ENCODE measurements at regions of chr1 and their contacts with region 1.

Region 1: GRCh38 chr1:26602378-26602959 is 72.9 kb downstream of the RPS6KA1 start:
- DNase-seq: no peak
- H3K4me3 ChIP-seq: no peak overlapping the region
- H3K27ac ChIP-seq: no peak overlapping the region
- H3K4me1 ChIP-seq: no peaks in the 10 kb centered on the region; a peak in 1 of 7 replicates
- H3K27me3 ChIP-seq: no peaks in the 10 kb centered on the region
- CTCF ChIP-seq: peak in 2 of 3 experiments; percentile 74 to 75; a peak in 3 of 4 replicates
- EP300 ChIP-seq: no peak
- POLR2A ChIP-seq: no peak
- RAD21 ChIP-seq: peak; percentile 94 to 95

Region 2: GRCh38 chr1:26478159-26478558 is 124.3 kb before region 1 on chr1:
- CTCF ChIA-PET with region 1: no interaction called
- POLR2A ChIA-PET with region 1: no interaction called
- DNase-seq: no peak
- H3K4me3 ChIP-seq: no peak overlapping the region
- H3K27ac ChIP-seq: no peak overlapping the region
- H3K4me1 ChIP-seq: peaks cover 0 to 7% (median 1%) of the 10 kb centered on the region in 4 experiments; a peak in 2 of 7 replicates
- H3K27me3 ChIP-seq: no peaks in the 10 kb centered on the region
- CTCF ChIP-seq: no peak
- EP300 ChIP-seq: no peak
- POLR2A ChIP-seq: no peak; a peak in 1 of 3 replicates
- RAD21 ChIP-seq: no peak

Region 3: DNA sequence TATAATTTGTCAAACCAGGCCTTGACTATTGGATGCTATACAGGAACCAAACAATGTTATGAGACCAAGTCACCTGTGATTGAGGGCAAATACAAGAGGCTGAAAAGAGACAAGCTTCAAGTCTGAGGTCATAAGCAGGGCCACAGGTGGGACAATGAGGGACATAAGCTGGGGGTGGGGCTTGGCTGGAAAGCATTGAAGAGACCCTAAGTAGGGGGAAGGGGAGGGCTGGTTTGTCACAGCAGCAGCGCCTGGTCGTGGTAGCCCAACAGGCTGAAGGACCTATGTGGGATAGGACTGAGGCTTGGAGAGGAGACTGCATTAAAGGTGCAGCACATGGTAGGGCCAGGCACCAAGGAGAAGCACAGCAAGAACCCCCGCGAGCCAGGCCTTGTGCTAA is 112.3 kb before region 1 on chr1:
- CTCF ChIA-PET with region 1: no interaction called
- POLR2A ChIA-PET with region 1: no interaction called
- DNase-seq: no peak
- H3K4me3 ChIP-seq: no peak overlapping the region
- H3K27ac ChIP-seq: no peak overlapping the region
- H3K4me1 ChIP-seq: no peaks in the 10 kb centered on the region; a peak in 1 of 7 replicates
- H3K27me3 ChIP-seq: no peaks in the 10 kb centered on the region
- CTCF ChIP-seq: no peak
- EP300 ChIP-seq: no peak
- POLR2A ChIP-seq: no peak
- RAD21 ChIP-seq: no peak

Region 4: GRCh38 chr1:26516987-26517765 is 85.3 kb before region 1 on chr1:
- CTCF ChIA-PET with region 1: no interaction called
- POLR2A ChIA-PET with region 1: no interaction called
- DNase-seq: no peak
- H3K4me3 ChIP-seq: no peak overlapping the region
- H3K27ac ChIP-seq: no peak overlapping the region
- H3K4me1 ChIP-seq: peaks cover 0 to 3% (median 0%) of the 10 kb centered on the region in 4 experiments; a peak in 1 of 7 replicates
- H3K27me3 ChIP-seq: no peaks in the 10 kb centered on the region; a peak in 1 of 7 replicates
- CTCF ChIP-seq: no peak
- EP300 ChIP-seq: no peak
- POLR2A ChIP-seq: no peak
- RAD21 ChIP-seq: no peak

Region 5: GRCh38 chr1:26583646-26584485 is 18.6 kb before region 1 on chr1:
- CTCF ChIA-PET with region 1: interaction called, 23 read pairs
- POLR2A ChIA-PET with region 1: no interaction called
- DNase-seq: peak; percentile 10 to 65
- H3K4me3 ChIP-seq: no peak overlapping the region
- H3K27ac ChIP-seq: no peak overlapping the region
- H3K4me1 ChIP-seq: no peaks in the 10 kb centered on the region
- H3K27me3 ChIP-seq: no peaks in the 10 kb centered on the region
- CTCF ChIP-seq: peak; percentile 71 to 86 (median 73)
- EP300 ChIP-seq: no peak
- POLR2A ChIP-seq: no peak
- RAD21 ChIP-seq: peak; percentile 74 to 81

Region 6: DNA sequence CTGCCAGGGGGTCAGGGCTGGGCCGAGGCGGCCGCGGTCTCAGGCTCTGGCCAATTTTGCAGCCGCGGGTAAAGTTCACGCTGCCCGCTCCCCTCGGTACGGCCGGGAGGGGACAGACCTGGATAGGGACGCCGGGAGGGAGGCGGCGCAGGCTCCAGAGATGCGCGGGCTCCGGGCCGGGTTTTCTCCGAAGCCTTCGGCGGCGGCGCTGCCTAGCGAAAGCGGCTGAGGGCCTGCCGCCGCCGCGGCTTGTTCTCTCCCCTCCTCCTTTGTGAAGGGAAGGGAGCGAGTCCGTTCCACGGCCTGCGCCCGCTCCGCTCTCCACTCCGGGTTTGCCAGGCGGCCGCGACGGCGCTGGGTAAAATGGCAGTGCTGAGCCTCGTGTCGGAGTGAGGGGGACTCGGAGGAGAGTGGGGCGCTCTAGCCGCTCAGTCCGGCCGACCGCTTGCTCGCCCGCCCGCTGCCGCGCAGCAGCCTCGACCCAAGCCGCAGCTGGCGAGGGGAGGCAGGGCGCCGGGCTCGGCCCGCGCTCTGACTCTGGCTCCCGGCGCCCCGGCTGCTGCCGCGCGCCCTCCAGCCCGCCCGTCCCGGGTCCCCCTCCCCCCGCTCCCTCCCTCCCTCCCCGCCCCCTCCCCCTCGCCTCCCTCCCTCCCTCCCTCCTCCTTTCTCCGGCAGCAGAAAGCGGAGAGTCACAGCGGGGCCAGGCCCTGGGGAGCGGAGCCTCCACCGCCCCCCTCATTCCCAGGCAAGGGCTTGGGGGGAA is 93.1 kb after region 1 on chr1 and contains the start of gene ARID1A:
- CTCF ChIA-PET with region 1: interaction called, 41 read pairs
- POLR2A ChIA-PET with region 1: interaction called, 4 read pairs
- DNase-seq: peak; percentile 73 to 97
- H3K4me3 ChIP-seq: peak within 1 kb of the TSS; percentile 88 to 95 (median 92)
- H3K27ac ChIP-seq: peak within 1 kb of the TSS; percentile 93
- H3K4me1 ChIP-seq: peaks cover 14 to 19% (median 16%) of the 10 kb centered on the region in 4 experiments; a peak in 6 of 7 replicates
- H3K27me3 ChIP-seq: no peaks in the 10 kb centered on the region
- CTCF ChIP-seq: no peak
- EP300 ChIP-seq: peak in 1 of 2 experiments; percentile 70; a peak in 1 of 3 replicates
- POLR2A ChIP-seq: peak; percentile 72 to 75
- RAD21 ChIP-seq: peak; percentile 6 to 13; a peak in 2 of 4 replicates
- total RNA-seq, gene ARID1A: 103 and 105 TPM in 2 replicates

Region 7: DNA sequence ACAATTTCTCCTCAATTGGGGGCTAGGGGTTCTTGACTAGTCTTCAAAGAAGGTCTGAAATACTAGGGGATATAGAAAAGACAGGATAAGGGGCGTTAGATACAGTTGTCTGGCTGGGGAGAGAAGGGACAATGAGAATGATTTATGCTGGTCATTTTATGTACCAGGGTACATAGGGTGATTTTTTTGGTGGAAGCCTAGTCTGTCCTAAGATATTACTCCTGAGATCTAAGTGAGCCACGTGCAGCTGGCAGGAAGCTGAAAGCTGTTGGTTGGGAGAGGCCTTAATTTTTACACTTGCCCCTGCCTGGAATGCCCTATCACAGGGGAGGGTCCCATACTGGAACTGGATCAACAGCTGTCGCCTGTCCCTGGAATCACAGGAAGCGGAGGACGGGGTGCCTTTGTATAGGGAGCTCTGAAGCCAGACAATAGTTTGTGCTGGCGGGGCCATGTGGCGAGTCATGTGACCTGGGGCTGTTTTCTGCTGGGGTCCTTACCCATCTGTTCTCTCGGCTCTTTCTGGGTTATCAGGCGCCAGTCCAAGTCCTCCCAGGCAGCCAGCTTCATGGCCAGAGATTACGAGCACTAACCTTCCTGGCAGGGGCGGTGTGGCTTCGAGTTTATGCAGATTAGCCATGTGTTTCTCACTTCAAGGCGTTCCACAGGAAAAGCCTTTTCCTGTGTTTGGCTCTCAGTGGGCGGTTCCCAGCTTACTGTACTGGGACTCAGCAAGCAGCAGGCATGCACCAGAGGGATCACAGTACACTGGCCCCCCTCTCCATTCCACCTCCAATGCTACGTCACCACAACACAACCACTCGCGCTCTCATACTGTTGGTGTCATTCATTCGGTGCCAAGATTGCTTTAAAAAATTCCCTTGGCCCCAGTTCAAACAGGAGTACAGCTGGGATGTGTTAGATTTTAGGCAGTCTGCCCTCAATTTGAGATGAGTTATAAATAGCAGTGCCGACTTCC is 120.8 kb after region 1 on chr1:
- CTCF ChIA-PET with region 1: interaction called, 10 read pairs
- POLR2A ChIA-PET with region 1: no interaction called
- DNase-seq: peak in 1 of 2 experiments; percentile 79
- H3K4me3 ChIP-seq: peak overlapping the region in 3 of 4 experiments; percentile 2 to 42 (median 15); a peak in 5 of 8 replicates
- H3K27ac ChIP-seq: peak overlapping the region; percentile 54
- H3K4me1 ChIP-seq: peaks cover 20 to 42% (median 26%) of the 10 kb centered on the region in 4 experiments
- H3K27me3 ChIP-seq: no peaks in the 10 kb centered on the region
- CTCF ChIP-seq: no peak
- EP300 ChIP-seq: no peak
- POLR2A ChIP-seq: peak in 1 of 2 experiments; percentile 69; a peak in 1 of 3 replicates
- RAD21 ChIP-seq: no peak

Region 8: GRCh38 chr1:26744075-26744959 is 141.8 kb after region 1 on chr1:
- CTCF ChIA-PET with region 1: interaction called, 12 read pairs
- POLR2A ChIA-PET with region 1: no interaction called
- DNase-seq: peak in 1 of 2 experiments; percentile 59
- H3K4me3 ChIP-seq: no peak overlapping the region
- H3K27ac ChIP-seq: no peak overlapping the region
- H3K4me1 ChIP-seq: peaks cover 0 to 8% (median 2%) of the 10 kb centered on the region in 4 experiments; a peak in 1 of 7 replicates
- H3K27me3 ChIP-seq: no peaks in the 10 kb centered on the region
- CTCF ChIP-seq: no peak
- EP300 ChIP-seq: no peak
- POLR2A ChIP-seq: no peak
- RAD21 ChIP-seq: no peak

Region 9: GRCh38 chr1:26787706-26788514 is 185.4 kb after region 1 on chr1 and contains the start of gene PIGV:
- CTCF ChIA-PET with region 1: interaction called, 121 read pairs
- POLR2A ChIA-PET with region 1: interaction called, 13 read pairs
- DNase-seq: peak in 1 of 2 experiments; percentile 95
- H3K4me3 ChIP-seq: peak within 1 kb of the TSS; percentile 63 to 84 (median 73)
- H3K27ac ChIP-seq: peak within 1 kb of the TSS; percentile 81
- H3K4me1 ChIP-seq: peaks cover 7 to 18% (median 12%) of the 10 kb centered on the region in 4 experiments; a peak in 6 of 7 replicates
- H3K27me3 ChIP-seq: no peaks in the 10 kb centered on the region
- CTCF ChIP-seq: no peak
- EP300 ChIP-seq: no peak
- POLR2A ChIP-seq: peak; percentile 70 to 87
- RAD21 ChIP-seq: no peak
- total RNA-seq, gene PIGV: 8.5 and 9.3 TPM in 2 replicates